Transverse colon (tissue), 4 donors: ENCODE measurements at regions of chr9 and their contacts with region 1.

Region 1: GRCh38 chr9:99416007-99416406 is 193.9 kb downstream of the SEC61B start:
- DNase-seq: no peak
- H3K4me3 ChIP-seq: no peak overlapping the region
- H3K27ac ChIP-seq: no peak overlapping the region
- H3K4me1 ChIP-seq: no peaks in the 10 kb centered on the region
- H3K27me3 ChIP-seq: no peaks in the 10 kb centered on the region
- CTCF ChIP-seq: no peak
- EP300 ChIP-seq: no peak
- POLR2A ChIP-seq: no peak

Region 2: DNA sequence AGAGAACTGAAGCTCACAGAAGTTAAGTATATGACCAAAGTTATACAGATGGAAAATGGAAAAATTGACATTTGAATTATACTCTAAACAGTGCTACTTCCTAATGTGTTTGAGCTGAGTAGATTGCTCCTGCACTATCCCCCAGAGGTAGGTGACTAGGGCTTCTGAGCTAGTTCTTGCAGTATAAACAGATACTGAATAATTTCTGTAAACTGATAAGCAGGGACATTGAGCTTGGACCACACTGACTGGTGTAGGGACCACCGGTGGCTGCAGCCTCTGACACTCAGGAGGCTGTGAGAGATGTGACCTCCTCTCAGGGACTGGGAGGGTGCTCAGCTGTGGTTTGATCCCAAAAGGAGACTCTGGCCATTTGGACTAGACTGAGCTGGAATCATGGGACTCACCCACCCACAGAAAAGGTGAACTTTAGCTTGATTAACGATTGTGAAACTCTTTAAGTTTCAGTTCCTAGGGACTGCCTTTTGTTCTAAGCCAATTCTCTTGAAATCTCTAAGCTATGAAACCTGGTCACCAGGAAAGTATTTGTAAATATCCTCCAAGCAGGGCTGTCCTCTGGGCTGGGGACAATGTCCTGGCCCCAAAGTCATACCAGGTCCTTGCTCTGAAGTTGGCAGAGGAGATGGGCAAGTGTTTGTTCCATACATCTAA is 97.6 kb after region 1 on chr9:
- in situ Hi-C with region 1: loop called in 1 of 4 experiments (anchors 25 kb)
- intact Hi-C with region 1: no loop called
- DNase-seq: no peak
- H3K4me3 ChIP-seq: no peak overlapping the region
- H3K27ac ChIP-seq: no peak overlapping the region
- H3K4me1 ChIP-seq: no peaks in the 10 kb centered on the region
- H3K27me3 ChIP-seq: no peaks in the 10 kb centered on the region
- CTCF ChIP-seq: no peak
- EP300 ChIP-seq: no peak
- POLR2A ChIP-seq: no peak